Spleen (tissue), 13 donors: ENCODE measurements at regions of chr16 and their contacts with region 1.

Region 1: GRCh38 chr16:75402821-75403475 is 30.4 kb downstream of the CFDP1 start:
- DNase-seq: no peak
- H3K4me3 ChIP-seq: no peak overlapping the region
- H3K27ac ChIP-seq: peak overlapping the region in 6 of 8 donors; percentile 20 to 69 (median 47)
- H3K4me1 ChIP-seq: peaks cover 0 to 21% (median 10%) of the 10 kb centered on the region in 6 donors
- H3K27me3 ChIP-seq: no peaks in the 10 kb centered on the region
- CTCF ChIP-seq: peak in 10 of 11 experiments; percentile 30 to 76 (median 72)
- POLR2A ChIP-seq: no peak

Region 2: GRCh38 chr16:75198135-75198600 is 204.8 kb before region 1 on chr16:
- intact Hi-C with region 1: loop called (anchors 5 kb)
- DNase-seq: peak; percentile 70
- H3K4me3 ChIP-seq: no peak overlapping the region
- H3K27ac ChIP-seq: no peak overlapping the region
- H3K4me1 ChIP-seq: peaks cover 3 to 30% (median 6%) of the 10 kb centered on the region in 6 donors
- H3K27me3 ChIP-seq: peaks cover 0 to 63% (median 8%) of the 10 kb centered on the region in 7 donors
- CTCF ChIP-seq: no peak
- POLR2A ChIP-seq: no peak

Region 3: GRCh38 chr16:75464130-75464918 is 61.4 kb after region 1 on chr16 and contains the start of gene TMEM170A:
- intact Hi-C with region 1: no loop called
- DNase-seq: peak; percentile 100
- H3K4me3 ChIP-seq: peak within 1 kb of the TSS; percentile 83 to 97 (median 93)
- H3K27ac ChIP-seq: peak within 1 kb of the TSS; percentile 96 to 100 (median 98)
- H3K4me1 ChIP-seq: peaks cover 0 to 63% (median 38%) of the 10 kb centered on the region in 6 donors
- H3K27me3 ChIP-seq: no peaks in the 10 kb centered on the region
- CTCF ChIP-seq: peak; percentile 100
- POLR2A ChIP-seq: peak; percentile 72 to 88 (median 88)
- total RNA-seq, gene TMEM170A: 26.3 to 54.0 (median 34.2) TPM

Region 4: GRCh38 chr16:75764154-75764768 is 361.3 kb after region 1 on chr16:
- intact Hi-C with region 1: loop called (anchors 10 kb)
- DNase-seq: no peak
- H3K4me3 ChIP-seq: no peak overlapping the region
- H3K27ac ChIP-seq: no peak overlapping the region
- H3K4me1 ChIP-seq: peaks cover 0 to 19% (median 2%) of the 10 kb centered on the region in 6 donors
- H3K27me3 ChIP-seq: no peaks in the 10 kb centered on the region
- CTCF ChIP-seq: peak; percentile 63 to 89 (median 76)
- POLR2A ChIP-seq: no peak